Activated T-helper 2 cell treated with anti-CD3 and anti-CD28 coated beads, Interferon-gamma antibody, Interleukin-2, Interleukin-4, amounts not matched to agents 10 μg/mL and 5 μg/mL and 100 μg/mL, durations not matched to agents 14 hours and 24 hours and 36 hours (primary cell): ENCODE measurements at regions of chr3 and their contacts with region 1.

Region 1: GRCh38 chr3:52001443-52001974 is 5.8 kb upstream of the RPL29 start:
- DNase-seq: peak; percentile 77
- H3K4me3 Mint-ChIP-seq: no peak overlapping the region
- H3K27ac Mint-ChIP-seq: no peak overlapping the region
- H3K4me1 Mint-ChIP-seq: peaks cover 13% of the 10 kb centered on the region
- H3K27me3 Mint-ChIP-seq: peaks cover 17% of the 10 kb centered on the region

Region 2: DNA sequence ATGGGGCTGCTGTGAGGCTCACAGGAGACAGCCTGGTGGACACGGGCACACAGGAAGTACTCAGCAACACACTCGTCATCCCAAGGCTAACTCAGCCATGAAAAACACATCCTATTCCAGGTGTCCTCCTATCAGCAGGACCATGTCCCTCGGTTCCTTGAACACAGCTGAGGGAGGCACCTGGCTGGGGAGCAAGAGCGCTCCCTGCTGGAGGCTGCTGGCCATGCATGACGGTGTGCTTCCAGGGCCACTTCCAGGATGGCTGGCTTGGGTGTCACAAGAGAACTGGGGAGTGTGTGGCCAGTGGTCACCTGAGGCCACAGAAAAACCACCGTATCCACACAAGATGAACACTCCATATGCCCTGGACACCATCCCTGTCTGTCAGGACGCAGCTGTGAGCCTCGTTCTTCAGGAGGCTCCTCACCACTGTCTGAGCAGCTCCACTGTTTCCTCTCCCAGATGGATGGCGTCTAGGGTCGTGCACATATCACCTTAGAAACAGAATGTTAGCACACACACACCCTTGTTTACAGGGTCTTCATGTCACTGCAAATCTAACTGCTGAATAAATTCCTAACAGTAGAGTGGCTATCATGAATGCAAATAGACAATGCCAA is 121.7 kb after region 1 on chr3:
- intact Hi-C with region 1: loop called (anchors 1 kb)
- DNase-seq: peak; percentile 64
- H3K4me3 Mint-ChIP-seq: no peak overlapping the region
- H3K27ac Mint-ChIP-seq: no peak overlapping the region
- H3K4me1 Mint-ChIP-seq: peaks cover 7% of the 10 kb centered on the region
- H3K27me3 Mint-ChIP-seq: no peaks in the 10 kb centered on the region

Region 3: GRCh38 chr3:52144034-52144795 is 142.7 kb after region 1 on chr3:
- intact Hi-C with region 1: loop called (anchors 1 kb)
- DNase-seq: peak; percentile 71
- H3K4me3 Mint-ChIP-seq: no peak overlapping the region
- H3K27ac Mint-ChIP-seq: no peak overlapping the region
- H3K4me1 Mint-ChIP-seq: peaks cover 6% of the 10 kb centered on the region
- H3K27me3 Mint-ChIP-seq: no peaks in the 10 kb centered on the region